ENCODE measurements at regions of chr10 and their contacts with region 1.

Region 1: DNA sequence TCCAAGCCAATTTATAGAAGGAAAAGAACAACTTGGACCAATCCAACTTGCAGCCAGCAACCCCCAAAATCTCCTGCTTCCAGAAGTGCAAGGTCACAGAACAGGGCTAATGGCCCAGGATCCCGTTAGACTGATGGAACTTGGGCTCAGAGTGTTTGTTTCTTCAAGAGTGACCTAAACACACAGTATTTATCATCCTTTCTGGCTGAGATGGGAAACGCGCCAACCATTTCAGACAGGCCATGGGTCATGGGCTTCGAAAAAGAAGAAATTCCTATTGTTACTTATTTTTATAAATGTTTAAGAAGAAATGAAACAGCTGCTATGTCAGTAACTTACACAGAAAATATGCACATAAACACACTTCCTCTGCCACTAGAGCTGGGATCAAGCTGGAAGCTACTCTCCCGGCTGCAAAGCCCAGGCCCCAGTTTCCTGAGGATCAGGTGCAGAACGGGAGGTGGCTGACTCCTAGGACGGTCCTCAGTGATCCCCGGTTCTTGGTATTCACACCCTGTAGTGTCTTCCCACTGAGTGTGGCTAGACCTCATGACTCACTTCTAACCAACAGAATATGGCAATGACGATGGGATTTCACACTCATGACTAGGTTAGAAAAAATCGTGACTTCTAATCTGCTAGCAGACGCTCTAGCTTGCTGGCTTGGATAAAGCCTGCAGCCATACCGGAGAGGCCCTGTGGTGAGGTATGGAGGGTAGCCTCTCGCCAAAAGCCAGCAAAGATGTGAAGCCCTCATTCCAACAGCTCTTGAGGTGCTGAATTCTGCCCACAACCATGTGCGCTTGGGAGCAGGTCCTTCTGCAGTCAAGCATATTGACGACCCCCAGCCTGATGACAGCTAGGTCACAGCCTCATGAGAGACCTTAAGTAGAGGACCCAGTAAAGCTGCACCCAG is 60.2 kb downstream of the CHST15 start:
- DNase-seq: no peak
- H3K4me3 ChIP-seq: no peak overlapping the region
- H3K27ac ChIP-seq: peak overlapping the region in 24 of 59 donors; percentile 1 to 73 (median 37)
- H3K27me3 ChIP-seq: no peaks in the 10 kb centered on the region
- CTCF ChIP-seq: no peak

Region 2: DNA sequence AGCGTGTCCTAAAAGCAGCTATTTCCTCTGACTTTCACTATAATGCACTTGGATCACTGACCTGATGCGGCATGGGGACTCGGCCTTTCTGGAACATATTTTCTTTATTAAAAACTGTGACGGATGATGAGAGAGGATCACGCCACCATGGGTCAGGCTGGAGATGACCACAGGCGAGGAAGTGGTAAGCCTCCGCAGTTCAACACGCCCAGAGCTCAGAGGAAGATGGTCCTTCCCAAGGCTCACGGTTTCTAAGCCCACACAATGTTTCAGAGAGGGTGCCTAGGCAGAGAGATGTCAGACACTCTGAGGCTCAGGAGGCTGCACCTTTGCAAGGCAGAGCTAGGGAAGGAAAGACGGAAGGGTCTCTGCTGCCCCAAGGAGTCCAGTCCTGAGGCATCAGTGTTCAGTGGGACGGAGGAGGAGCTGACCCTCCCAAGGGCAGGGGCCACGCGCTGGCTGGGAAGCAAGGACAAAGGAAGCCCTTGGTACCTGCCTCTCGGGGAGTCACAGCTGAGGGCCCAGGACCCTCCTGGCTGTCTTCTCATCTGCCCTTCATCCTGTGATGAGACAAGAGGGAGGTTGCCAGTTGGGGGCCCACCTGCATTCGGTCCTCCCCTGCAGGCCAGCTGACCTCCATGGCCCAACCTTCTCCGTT is 50.6 kb after region 1 on chr10:
- intact Hi-C with region 1: loop called in 1 of 2 experiments (anchors 2 kb)
- DNase-seq: no peak
- H3K4me3 ChIP-seq: peak overlapping the region in 1 of 59 donors; percentile 10
- H3K27ac ChIP-seq: peak overlapping the region in 25 of 59 donors; percentile 2 to 62 (median 32)
- H3K27me3 ChIP-seq: no peaks in the 10 kb centered on the region
- CTCF ChIP-seq: no peak

Region 3: DNA sequence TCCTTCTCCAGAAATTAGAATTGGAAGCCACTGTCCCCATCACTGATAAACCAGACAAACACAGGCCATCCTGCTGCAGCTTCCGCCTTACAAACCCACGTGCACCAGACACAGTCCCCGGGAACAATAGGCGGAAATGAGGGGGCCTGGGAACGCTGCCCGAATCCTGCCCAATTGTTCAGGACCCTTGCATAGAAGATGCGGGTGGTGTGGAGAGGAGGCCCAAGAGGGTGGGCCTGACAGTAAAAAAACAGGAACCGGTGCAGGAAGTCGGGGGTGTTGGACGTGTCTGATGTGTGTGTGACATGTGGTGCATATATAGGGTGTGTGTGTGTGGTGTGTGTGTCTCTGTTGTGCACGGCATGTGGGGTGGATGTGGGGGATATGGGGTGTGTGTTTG is 86.7 kb after region 1 on chr10:
- intact Hi-C with region 1: no loop called
- DNase-seq: peak in 1 of 10 donors; percentile 27
- H3K4me3 ChIP-seq: no peak overlapping the region
- H3K27ac ChIP-seq: no peak overlapping the region
- H3K27me3 ChIP-seq: no peaks in the 10 kb centered on the region
- CTCF ChIP-seq: no peak

Measured in dorsolateral prefrontal cortex (tissue), 120 donors.